ENCODE measurements at regions of chr12 and their contacts with region 1.

Region 1: GRCh38 chr12:122399592-122400373 is 22.7 kb downstream of the CLIP1 start:
- DNase-seq: peak; percentile 72
- H3K4me3 Mint-ChIP-seq: peak overlapping the region; percentile 39
- H3K27ac Mint-ChIP-seq: peak overlapping the region; percentile 83
- H3K4me1 Mint-ChIP-seq: peaks cover 38% of the 10 kb centered on the region
- H3K27me3 Mint-ChIP-seq: no peaks in the 10 kb centered on the region

Region 2: GRCh38 chr12:122318607-122319605 is 80.9 kb before region 1 on chr12:
- CTCF ChIA-PET with region 1: no interaction called
- DNase-seq: no peak
- H3K4me3 Mint-ChIP-seq: no peak overlapping the region
- H3K27ac Mint-ChIP-seq: no peak overlapping the region
- H3K4me1 Mint-ChIP-seq: no peaks in the 10 kb centered on the region
- H3K27me3 Mint-ChIP-seq: no peaks in the 10 kb centered on the region

Region 3: GRCh38 chr12:122413516-122414404 is 14.0 kb after region 1 on chr12:
- CTCF ChIA-PET with region 1: interaction called, 12 read pairs
- DNase-seq: no peak
- H3K4me3 Mint-ChIP-seq: no peak overlapping the region
- H3K27ac Mint-ChIP-seq: peak overlapping the region; percentile 84
- H3K4me1 Mint-ChIP-seq: peaks cover 34% of the 10 kb centered on the region
- H3K27me3 Mint-ChIP-seq: no peaks in the 10 kb centered on the region

Region 4: GRCh38 chr12:122421821-122422729 is 22.3 kb after region 1 on chr12 and contains the start of gene CLIP1:
- CTCF ChIA-PET with region 1: interaction called, 24 read pairs
- DNase-seq: peak; percentile 74
- H3K4me3 Mint-ChIP-seq: peak within 1 kb of the TSS; percentile 84
- H3K27ac Mint-ChIP-seq: peak within 1 kb of the TSS; percentile 88
- H3K4me1 Mint-ChIP-seq: peaks cover 46% of the 10 kb centered on the region
- H3K27me3 Mint-ChIP-seq: peaks cover 9% of the 10 kb centered on the region

Region 5: DNA sequence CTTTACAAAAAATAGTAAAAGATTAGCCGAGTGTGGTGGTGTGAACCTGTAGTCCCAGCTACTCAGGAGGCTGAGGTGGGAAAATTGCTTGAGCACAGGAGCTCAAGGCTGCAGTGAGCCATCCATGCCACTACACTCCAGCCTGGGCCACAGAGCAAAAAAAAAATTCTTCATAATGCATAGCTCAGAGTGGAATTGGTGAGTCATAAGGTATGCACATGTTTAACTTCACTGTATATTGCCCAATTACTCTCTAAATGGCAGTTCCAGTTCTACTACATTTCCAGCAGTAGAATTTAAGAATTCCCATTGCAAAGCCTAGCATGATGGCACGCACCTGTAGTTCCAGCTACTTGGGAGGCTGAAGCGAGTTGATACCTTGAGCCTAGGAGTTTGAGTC is 49.6 kb after region 1 on chr12:
- CTCF ChIA-PET with region 1: interaction called, 11 read pairs
- DNase-seq: no peak
- H3K4me3 Mint-ChIP-seq: no peak overlapping the region
- H3K27ac Mint-ChIP-seq: no peak overlapping the region
- H3K4me1 Mint-ChIP-seq: peaks cover 25% of the 10 kb centered on the region
- H3K27me3 Mint-ChIP-seq: no peaks in the 10 kb centered on the region

Region 6: GRCh38 chr12:122463806-122464205 is 64.0 kb after region 1 on chr12:
- CTCF ChIA-PET with region 1: interaction called, 11 read pairs
- DNase-seq: no peak
- H3K4me3 Mint-ChIP-seq: no peak overlapping the region
- H3K27ac Mint-ChIP-seq: no peak overlapping the region
- H3K4me1 Mint-ChIP-seq: no peaks in the 10 kb centered on the region
- H3K27me3 Mint-ChIP-seq: no peaks in the 10 kb centered on the region

Region 7: DNA sequence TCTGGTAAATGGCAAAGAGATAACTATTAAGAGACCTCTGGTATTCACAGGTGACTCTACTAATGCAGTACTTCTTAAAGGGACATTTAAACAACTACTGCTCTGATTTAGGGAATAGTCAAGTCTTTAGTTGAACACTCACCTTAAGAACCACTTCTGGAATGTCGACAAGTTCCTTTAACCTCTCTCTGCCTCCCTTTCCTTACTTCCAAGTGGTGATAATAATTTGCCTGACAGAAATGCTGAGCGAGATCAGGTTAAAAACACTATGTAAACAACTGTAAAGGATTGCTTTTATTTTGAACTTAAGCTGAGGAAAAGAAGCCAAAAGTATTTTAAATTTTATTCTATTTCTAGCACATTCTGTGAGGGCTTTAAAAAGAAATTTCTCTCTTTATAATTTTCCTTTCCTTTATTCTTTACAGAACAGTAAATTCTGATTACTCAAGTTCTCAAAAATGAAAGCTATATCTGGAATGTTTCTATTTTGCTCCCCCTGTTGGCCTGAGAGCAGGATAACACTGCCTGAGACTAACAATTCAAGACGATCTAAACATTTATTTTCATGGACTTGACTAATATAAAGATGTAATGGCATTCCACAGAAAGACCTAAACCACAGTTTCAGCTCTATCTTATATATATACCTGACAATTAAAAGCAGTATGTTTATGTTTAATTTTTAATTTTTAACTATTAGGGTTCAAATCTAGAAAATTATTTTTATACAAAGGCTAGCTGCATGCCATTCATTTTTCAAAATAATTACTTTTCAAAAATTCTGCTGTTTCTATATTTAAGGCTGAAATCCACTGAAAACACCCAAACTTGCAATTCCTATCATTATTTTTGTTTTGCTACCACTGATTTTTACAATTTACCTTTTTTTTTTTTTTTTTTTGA is 71.8 kb after region 1 on chr12:
- CTCF ChIA-PET with region 1: interaction called, 192 read pairs
- DNase-seq: no peak
- H3K4me3 Mint-ChIP-seq: no peak overlapping the region
- H3K27ac Mint-ChIP-seq: no peak overlapping the region
- H3K4me1 Mint-ChIP-seq: peaks cover 21% of the 10 kb centered on the region
- H3K27me3 Mint-ChIP-seq: no peaks in the 10 kb centered on the region

Region 8: DNA sequence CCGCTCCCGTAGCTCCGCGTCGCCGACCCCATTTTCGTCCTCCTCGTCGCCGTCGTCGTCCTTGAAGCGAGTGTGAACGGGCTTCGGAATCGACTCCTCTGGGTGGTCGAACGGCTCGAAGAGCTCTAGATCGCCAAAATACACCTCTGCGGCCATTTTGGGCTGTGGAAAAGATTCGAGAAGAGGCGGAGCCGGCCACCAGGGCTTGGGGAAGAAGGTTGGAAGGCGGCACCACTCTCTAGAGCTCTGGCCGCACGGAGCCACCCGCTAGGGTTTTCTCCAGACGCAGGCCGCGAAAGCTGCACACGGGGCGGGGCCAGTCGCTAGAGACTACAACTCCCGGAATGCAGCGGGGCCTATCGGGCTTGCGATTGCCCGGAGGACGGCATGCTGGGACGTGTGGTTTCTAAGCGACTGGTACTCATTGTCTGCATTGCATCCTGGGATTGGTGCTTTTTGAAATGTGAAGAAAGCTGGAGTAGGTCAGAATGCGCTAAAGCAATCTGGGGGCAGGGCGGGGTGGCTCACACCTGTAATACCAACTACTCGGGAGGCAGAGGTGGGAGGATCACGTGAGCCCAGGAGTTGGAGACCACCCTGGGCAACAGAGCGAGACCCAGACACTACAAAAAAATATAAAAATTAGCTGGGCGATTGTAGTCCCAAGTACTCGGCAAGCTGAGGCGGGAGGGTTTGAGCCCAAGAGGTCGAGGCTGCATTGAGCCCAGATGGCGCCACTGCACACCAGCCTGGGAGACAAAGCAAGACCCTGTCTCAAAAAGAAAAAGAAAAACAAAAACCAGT is 101.1 kb after region 1 on chr12 and contains the start of gene ZCCHC8:
- CTCF ChIA-PET with region 1: interaction called, 22 read pairs
- DNase-seq: peak; percentile 99
- H3K4me3 Mint-ChIP-seq: peak within 1 kb of the TSS; percentile 99
- H3K27ac Mint-ChIP-seq: peak within 1 kb of the TSS; percentile 99
- H3K4me1 Mint-ChIP-seq: peaks cover 47% of the 10 kb centered on the region
- H3K27me3 Mint-ChIP-seq: no peaks in the 10 kb centered on the region

Region 9: DNA sequence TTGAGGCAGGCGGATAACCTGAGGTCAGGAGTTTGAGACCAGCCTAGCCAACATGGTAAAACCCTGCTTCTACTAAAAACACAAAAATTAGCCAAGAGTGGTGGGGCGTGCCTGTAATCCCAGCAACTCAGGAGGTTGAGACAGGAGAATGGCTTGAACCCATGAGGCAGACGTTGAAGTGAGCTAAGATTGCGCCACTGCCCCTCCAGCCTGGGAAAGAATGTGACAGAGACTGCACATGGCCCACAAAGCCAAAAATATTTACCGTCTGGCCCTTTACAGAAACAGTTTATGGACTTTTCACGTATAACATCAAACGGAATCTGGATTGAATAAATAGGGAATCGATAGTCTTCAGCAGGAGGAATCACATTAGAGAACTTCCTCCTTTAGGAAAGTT is 123.5 kb after region 1 on chr12:
- CTCF ChIA-PET with region 1: no interaction called
- DNase-seq: no peak
- H3K4me3 Mint-ChIP-seq: no peak overlapping the region
- H3K27ac Mint-ChIP-seq: peak overlapping the region; percentile 53
- H3K4me1 Mint-ChIP-seq: peaks cover 55% of the 10 kb centered on the region
- H3K27me3 Mint-ChIP-seq: no peaks in the 10 kb centered on the region